ENCODE measurements at regions of chr17 and their contacts with region 1.

Region 1: DNA sequence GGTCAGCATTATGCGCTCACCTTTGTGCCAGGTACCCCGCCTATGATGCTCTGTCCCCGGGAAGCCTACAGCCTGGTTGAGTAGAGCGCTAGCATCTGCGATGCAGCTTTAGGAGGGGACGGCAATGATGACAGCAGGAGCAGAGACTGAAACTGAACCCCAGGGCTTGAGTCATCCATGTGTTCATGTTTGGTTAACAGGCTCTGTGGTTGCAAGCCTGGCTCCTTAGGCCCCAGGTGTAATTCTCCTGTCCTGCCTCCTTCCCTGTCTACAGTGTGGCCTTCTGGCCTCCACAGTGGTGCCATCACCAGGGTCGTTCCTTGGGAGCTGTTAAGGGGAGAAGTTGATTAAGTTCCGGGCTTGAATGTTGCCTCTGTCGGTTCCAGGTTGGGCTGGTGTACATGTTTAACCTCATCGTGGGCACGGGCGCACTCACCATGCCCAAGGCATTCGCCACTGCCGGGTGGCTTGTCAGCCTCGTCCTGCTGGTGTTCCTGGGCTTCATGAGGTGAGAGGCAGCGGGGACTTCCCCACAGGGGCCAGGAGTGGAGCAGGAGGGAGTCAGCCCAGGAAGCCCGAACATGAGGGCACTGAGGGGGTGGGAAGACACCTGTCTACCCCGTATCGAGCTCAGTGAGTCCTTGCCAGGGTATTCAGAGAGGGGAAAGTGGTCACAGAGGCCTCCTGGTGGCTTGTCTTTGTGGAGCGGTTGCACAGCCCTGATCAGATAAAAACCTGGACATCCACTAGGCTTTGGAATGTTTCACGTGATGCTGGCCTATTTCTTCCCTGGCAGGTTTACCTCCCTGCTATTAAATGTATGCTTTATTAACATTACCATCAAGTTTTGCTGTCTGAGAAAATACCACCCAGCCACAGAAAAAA is 9.2 kb upstream of the NAT9 start:
- DNase-seq: no peak
- ATAC-seq: peak in 2 of 4 experiments; percentile 25 to 36
- H3K4me3 ChIP-seq: no peak overlapping the region
- H3K4me3 Mint-ChIP-seq: peak overlapping the region in 1 of 3 donors; percentile 57
- H3K27ac ChIP-seq: no peak overlapping the region
- H3K27ac Mint-ChIP-seq: peak overlapping the region; percentile 63 to 94
- H3K4me1 ChIP-seq: peaks cover 37 to 62% of the 10 kb centered on the region in 2 experiments
- H3K4me1 Mint-ChIP-seq: peaks cover 55 to 70% (median 57%) of the 10 kb centered on the region in 3 donors
- H3K27me3 ChIP-seq: no peaks in the 10 kb centered on the region
- H3K27me3 Mint-ChIP-seq: no peaks in the 10 kb centered on the region

Region 2: DNA sequence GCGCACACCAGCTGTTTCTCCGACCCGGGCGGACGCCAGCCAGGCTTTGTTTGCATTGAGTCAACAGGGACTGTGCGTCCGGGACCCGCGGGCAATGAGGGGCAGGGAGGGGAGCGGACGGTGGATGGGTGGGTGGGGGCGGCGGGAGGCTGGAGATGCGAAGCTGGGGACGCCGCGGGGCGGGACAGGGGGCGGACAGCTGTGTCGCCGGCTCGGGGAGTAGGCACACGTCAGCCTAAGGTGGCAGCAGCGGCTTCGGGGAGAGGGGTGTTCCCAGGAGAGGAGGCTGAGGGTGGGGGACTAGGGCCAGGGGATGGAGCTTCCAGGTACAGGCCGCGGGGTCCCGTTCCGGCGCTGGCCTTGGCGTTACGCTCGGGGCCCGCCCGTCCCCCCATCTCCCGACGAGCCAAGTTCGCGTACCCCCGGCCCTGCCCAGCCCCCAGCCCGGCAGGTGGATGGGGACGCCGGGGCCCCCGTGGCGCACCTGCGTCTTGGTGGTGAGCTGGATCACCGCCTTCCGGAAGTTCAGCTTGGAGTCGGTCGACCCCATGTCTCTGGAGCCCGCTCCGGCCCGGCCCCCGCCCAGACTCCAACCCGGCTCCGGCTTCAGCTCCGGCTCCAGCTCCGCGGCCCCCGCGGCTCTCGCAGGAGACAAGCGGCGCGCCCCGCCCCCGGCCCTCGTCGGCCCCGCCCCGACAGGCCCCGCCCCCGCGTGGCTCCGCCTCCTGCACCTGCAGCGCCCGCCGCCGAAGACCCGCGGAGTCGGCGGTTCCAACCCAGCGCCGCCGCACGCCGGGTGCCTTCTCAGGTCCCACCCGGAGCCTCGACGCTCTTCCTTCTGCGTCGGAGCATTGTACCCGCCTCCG is 187.0 kb after region 1 on chr17 and contains the start of gene HID1:
- CTCF ChIA-PET with region 1: interaction called in 1 of 2 experiments, 10 read pairs
- POLR2A ChIA-PET with region 1: no interaction called
- DNase-seq: peak; percentile 56 to 88 (median 74)
- ATAC-seq: peak; percentile 90 to 93 (median 92)
- H3K4me3 ChIP-seq: peak within 1 kb of the TSS; percentile 53 to 59
- H3K4me3 Mint-ChIP-seq: peak within 1 kb of the TSS; percentile 80 to 96 (median 82)
- H3K27ac ChIP-seq: no peak within 1 kb of the TSS
- H3K27ac Mint-ChIP-seq: peak within 1 kb of the TSS; percentile 24 to 61
- H3K4me1 ChIP-seq: peaks cover 2 to 21% of the 10 kb centered on the region in 2 experiments
- H3K4me1 Mint-ChIP-seq: peaks cover 6 to 13% (median 6%) of the 10 kb centered on the region in 3 donors
- H3K27me3 ChIP-seq: peaks cover 0 to 41% of the 10 kb centered on the region in 2 experiments
- H3K27me3 Mint-ChIP-seq: peaks cover 0 to 19% of the 10 kb centered on the region in 2 donors
- total RNA-seq, gene HID1: 12.7 to 21.0 (median 14.5) TPM

Measured in T-cell (primary cell).